ENCODE measurements at regions of chr4 and their contacts with region 1.

Region 1: GRCh38 chr4:82373816-82374625 is at the start of gene HNRNPD:
- DNase-seq: peak; percentile 97
- CTCF ChIP-seq: no peak

Region 2: DNA sequence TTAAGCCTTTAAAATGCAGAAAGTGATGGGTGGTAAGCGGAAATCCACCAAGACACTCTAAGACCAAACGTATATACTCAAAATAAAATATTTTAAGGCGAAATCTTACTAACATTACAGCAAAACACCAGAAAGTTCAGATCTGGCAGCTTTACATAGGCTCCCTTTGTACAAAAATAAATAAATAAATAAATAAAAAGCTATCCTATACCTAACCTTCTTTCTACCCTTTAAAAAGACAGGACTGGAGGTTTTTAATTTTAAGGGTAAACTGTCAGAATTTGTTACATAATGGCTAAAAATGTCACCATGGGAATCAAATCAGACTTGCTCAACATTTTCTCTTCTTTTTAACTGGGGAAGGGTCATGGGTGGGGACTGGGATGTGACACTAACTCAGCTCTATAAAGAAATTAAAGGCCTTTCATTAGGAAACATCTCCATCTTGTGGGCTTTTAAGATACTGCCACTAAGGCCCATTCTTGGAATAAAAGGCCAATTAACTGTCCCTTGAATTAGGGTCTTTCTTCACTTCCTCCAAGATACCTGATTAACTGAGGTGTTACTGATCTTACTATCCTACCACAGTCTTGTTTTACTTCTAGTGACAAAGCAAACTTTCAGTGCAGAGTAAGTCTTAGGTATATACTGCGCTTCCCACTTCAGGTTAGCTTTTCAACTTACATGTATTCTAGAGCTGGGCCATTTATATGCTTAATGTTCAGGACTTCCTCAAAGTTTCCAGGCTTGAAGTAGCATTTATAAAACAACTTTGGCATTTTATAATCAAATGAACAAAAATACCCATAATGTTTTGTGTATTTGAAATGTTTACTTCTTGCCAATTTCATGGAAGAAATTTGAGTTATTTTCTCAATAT is 13.5 kb before region 1 on chr4:
- CTCF ChIA-PET with region 1: interaction called, 14 read pairs
- POLR2A ChIA-PET with region 1: interaction called, 4 read pairs
- DNase-seq: no peak
- CTCF ChIP-seq: peak; percentile 58

Region 3: GRCh38 chr4:82419451-82419850 is 45.4 kb after region 1 on chr4:
- CTCF ChIA-PET with region 1: no interaction called
- POLR2A ChIA-PET with region 1: interaction called, 12 read pairs
- DNase-seq: no peak
- CTCF ChIP-seq: no peak

Region 4: GRCh38 chr4:82428969-82429727 is 55.1 kb after region 1 on chr4:
- CTCF ChIA-PET with region 1: interaction called, 16 read pairs
- POLR2A ChIA-PET with region 1: interaction called, 20 read pairs
- DNase-seq: peak; percentile 95
- CTCF ChIP-seq: peak; percentile 93

Region 5: DNA sequence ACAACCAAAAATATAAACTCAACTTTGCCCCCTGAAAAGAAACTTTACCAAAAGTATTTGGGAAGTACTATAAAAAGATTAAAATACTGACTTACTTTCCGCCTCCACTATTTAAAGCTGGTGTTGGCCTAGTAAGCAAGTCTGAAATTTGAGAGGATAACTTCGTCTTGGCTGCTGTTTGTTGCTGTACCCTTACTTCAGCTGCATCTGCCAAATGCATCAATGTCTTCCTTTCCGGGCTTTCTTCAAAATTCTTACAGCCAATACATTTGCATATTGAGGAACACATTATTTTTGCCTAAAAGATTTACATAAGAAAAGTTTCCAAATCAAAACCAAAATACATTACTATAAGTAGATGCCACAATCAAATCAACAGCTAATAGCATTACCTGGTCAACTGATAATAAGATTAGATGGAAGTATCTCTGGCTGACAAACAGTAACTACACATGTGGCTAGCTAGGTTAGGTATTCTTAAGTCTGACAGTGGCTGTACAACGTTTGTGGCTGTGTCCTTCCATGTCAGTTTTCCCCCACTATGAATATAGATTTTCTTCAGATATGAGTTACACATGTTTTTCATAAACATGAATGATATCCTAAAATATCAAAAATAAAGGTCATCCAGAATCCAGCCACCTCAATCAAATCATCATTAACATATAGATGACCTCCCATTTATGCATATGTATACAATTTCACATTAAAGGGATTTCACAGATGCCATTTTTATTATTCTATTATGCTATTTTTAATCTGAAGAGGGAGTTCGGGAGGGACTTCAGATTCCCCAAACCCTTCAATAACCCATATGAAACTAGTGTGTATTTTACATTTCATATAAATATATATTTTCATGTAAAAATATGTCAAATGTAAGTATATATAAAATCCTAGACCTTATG is 557.1 kb after region 1 on chr4:
- CTCF ChIA-PET with region 1: no interaction called
- POLR2A ChIA-PET with region 1: no interaction called
- DNase-seq: no peak
- CTCF ChIP-seq: no peak

Measured in GM10248 (cell line).